Naive thymus-derived CD4-positive, alpha-beta T cell (primary cell): ENCODE measurements at regions of chr13 and their contacts with region 1.

Region 1: DNA sequence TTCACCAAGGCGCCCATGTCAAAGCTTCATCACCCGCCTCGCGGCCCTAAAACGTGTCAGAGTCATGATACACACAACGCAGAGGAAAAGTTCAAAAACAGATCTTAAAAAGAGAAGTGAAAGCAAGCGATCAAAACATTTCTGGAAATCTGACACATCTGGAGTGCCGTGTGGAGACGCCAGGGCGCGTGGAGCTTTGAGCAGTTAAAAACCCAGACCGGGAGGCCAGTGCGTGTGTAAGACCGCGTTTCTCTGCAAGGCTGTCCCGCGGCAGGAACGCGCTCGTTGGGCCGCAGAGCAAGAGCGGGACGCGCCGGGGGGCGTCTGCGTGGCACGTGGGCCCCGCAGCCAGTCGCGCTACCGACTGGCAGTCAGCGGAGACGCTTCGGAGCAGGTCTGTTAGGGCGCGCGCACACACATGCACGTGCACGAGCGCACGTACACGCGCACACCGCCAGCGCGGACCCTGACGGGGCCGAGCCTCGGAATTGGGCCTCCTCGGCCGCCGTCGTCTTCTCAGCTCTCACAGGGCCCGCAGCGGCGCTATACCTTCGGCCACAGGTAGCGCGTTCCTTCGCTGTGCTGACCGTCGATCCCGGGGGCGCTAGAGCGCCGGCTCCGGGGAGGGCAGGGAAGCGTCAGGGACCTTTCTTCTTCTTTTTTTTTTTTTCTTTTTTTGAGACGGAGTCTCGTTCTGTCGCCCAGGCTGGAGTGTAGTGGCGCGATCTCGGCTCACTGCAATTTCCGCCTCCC is 35.8 kb downstream of the RNF6 start:
- DNase-seq: peak; percentile 86 to 93 (median 92)
- ATAC-seq: peak; percentile 96
- H3K4me3 ChIP-seq: peak overlapping the region; percentile 86
- H3K4me3 Mint-ChIP-seq: peak overlapping the region; percentile 87 to 99 (median 92)
- H3K27ac ChIP-seq: peak overlapping the region; percentile 80
- H3K27ac Mint-ChIP-seq: peak overlapping the region; percentile 92 to 99 (median 95)
- H3K4me1 ChIP-seq: peaks cover 10 to 13% of the 10 kb centered on the region in 2 donors
- H3K4me1 Mint-ChIP-seq: peaks cover 0 to 36% (median 27%) of the 10 kb centered on the region in 7 donors
- H3K27me3 ChIP-seq: no peaks in the 10 kb centered on the region
- H3K27me3 Mint-ChIP-seq: no peaks in the 10 kb centered on the region

Region 2: GRCh38 chr13:24922745-24923591 is 1263.3 kb before region 1 on chr13:
- CTCF ChIA-PET with region 1: no interaction called
- POLR2A ChIA-PET with region 1: no interaction called
- intact Hi-C with region 1: loop called in 1 of 2 experiments (anchors 5 kb)
- DNase-seq: peak; percentile 79 to 93 (median 87)
- ATAC-seq: peak; percentile 100
- H3K4me3 ChIP-seq: peak overlapping the region; percentile 78
- H3K4me3 Mint-ChIP-seq: peak overlapping the region; percentile 89 to 100 (median 98)
- H3K27ac ChIP-seq: peak overlapping the region; percentile 71
- H3K27ac Mint-ChIP-seq: peak overlapping the region; percentile 73 to 95 (median 91)
- H3K4me1 ChIP-seq: no peaks in the 10 kb centered on the region
- H3K4me1 Mint-ChIP-seq: peaks cover 0 to 22% (median 14%) of the 10 kb centered on the region in 7 donors
- H3K27me3 ChIP-seq: no peaks in the 10 kb centered on the region
- H3K27me3 Mint-ChIP-seq: peaks cover 0 to 12% (median 0%) of the 10 kb centered on the region in 5 donors

Region 3: GRCh38 chr13:26168237-26168820 is 18.0 kb before region 1 on chr13:
- CTCF ChIA-PET with region 1: no interaction called
- POLR2A ChIA-PET with region 1: no interaction called
- intact Hi-C with region 1: no loop called
- DNase-seq: no peak
- ATAC-seq: no peak
- H3K4me3 ChIP-seq: no peak overlapping the region
- H3K4me3 Mint-ChIP-seq: no peak overlapping the region
- H3K27ac ChIP-seq: no peak overlapping the region
- H3K27ac Mint-ChIP-seq: no peak overlapping the region
- H3K4me1 ChIP-seq: no peaks in the 10 kb centered on the region
- H3K4me1 Mint-ChIP-seq: peaks cover 0 to 3% (median 0%) of the 10 kb centered on the region in 7 donors
- H3K27me3 ChIP-seq: no peaks in the 10 kb centered on the region
- H3K27me3 Mint-ChIP-seq: peaks cover 0 to 8% (median 0%) of the 10 kb centered on the region in 5 donors

Region 4: GRCh38 chr13:26198110-26198509 is 11.8 kb after region 1 on chr13:
- CTCF ChIA-PET with region 1: interaction called, 4 read pairs
- POLR2A ChIA-PET with region 1: interaction called, 9 read pairs
- intact Hi-C with region 1: loop called in 1 of 2 experiments (anchors 2 kb)
- DNase-seq: no peak
- ATAC-seq: no peak
- H3K4me3 ChIP-seq: no peak overlapping the region
- H3K4me3 Mint-ChIP-seq: no peak overlapping the region
- H3K27ac ChIP-seq: no peak overlapping the region
- H3K27ac Mint-ChIP-seq: no peak overlapping the region
- H3K4me1 ChIP-seq: no peaks in the 10 kb centered on the region
- H3K4me1 Mint-ChIP-seq: peaks cover 0 to 5% (median 0%) of the 10 kb centered on the region in 7 donors
- H3K27me3 ChIP-seq: no peaks in the 10 kb centered on the region
- H3K27me3 Mint-ChIP-seq: no peaks in the 10 kb centered on the region

Region 5: DNA sequence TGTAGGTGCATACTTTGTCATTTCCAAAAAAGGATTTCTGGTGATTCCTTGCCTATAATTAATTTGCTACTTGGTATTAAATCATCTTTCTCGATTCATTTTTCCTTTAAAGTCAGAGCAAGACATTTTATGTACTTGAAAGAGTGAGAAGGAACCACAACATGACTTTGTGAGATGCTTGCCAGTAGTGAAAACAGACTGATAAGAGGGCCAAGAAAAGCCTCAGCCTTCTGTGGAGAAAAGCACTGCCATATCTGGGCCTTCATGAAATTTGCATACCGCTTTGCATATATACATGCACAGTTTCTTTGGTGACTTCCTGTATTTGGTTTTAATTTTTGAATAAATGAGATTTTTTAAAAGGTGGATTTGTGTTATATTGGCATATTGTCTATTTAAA is 196.1 kb after region 1 on chr13:
- CTCF ChIA-PET with region 1: no interaction called
- POLR2A ChIA-PET with region 1: no interaction called
- intact Hi-C with region 1: loop called in 1 of 2 experiments (anchors 10 kb)
- DNase-seq: no peak
- ATAC-seq: no peak
- H3K4me3 ChIP-seq: no peak overlapping the region
- H3K4me3 Mint-ChIP-seq: no peak overlapping the region
- H3K27ac ChIP-seq: no peak overlapping the region
- H3K27ac Mint-ChIP-seq: no peak overlapping the region
- H3K4me1 ChIP-seq: peaks cover 0 to 4% of the 10 kb centered on the region in 2 donors
- H3K4me1 Mint-ChIP-seq: peaks cover 5 to 24% (median 14%) of the 10 kb centered on the region in 7 donors
- H3K27me3 ChIP-seq: no peaks in the 10 kb centered on the region
- H3K27me3 Mint-ChIP-seq: no peaks in the 10 kb centered on the region

Region 6: DNA sequence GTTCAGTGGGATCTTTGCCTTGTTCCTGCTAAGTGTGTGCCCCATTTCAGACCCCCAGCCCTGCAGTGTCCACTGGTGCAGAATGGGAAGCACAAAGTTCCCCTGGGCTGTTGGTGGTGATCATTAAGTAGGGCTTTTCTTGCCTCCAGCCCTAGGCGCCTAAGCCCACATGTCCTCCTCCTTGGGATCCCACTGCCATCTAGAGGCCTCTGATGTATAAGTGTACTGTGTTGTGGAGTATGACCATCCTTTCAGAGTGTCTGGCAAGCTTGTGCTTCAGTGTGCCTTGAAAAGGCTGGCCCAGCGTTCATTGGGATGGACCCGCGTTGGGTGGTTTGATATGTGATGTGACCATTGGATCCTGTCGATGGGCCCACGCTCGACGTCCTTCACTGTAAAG is 442.4 kb after region 1 on chr13:
- CTCF ChIA-PET with region 1: interaction called, 3 read pairs
- POLR2A ChIA-PET with region 1: no interaction called
- intact Hi-C with region 1: loop called in 1 of 2 experiments (anchors 1 kb)
- DNase-seq: no peak
- ATAC-seq: no peak
- H3K4me3 ChIP-seq: no peak overlapping the region
- H3K4me3 Mint-ChIP-seq: no peak overlapping the region
- H3K27ac ChIP-seq: no peak overlapping the region
- H3K27ac Mint-ChIP-seq: no peak overlapping the region
- H3K4me1 ChIP-seq: no peaks in the 10 kb centered on the region
- H3K4me1 Mint-ChIP-seq: no peaks in the 10 kb centered on the region
- H3K27me3 ChIP-seq: no peaks in the 10 kb centered on the region
- H3K27me3 Mint-ChIP-seq: peaks cover 0 to 13% (median 0%) of the 10 kb centered on the region in 5 donors

Region 7: GRCh38 chr13:26872525-26873385 is 686.5 kb after region 1 on chr13:
- CTCF ChIA-PET with region 1: no interaction called
- POLR2A ChIA-PET with region 1: no interaction called
- intact Hi-C with region 1: loop called in 1 of 2 experiments (anchors 10 kb)
- DNase-seq: peak in 7 of 9 donors; percentile 16 to 53 (median 28)
- ATAC-seq: no peak
- H3K4me3 ChIP-seq: no peak overlapping the region
- H3K4me3 Mint-ChIP-seq: no peak overlapping the region
- H3K27ac ChIP-seq: no peak overlapping the region
- H3K27ac Mint-ChIP-seq: no peak overlapping the region
- H3K4me1 ChIP-seq: no peaks in the 10 kb centered on the region
- H3K4me1 Mint-ChIP-seq: no peaks in the 10 kb centered on the region
- H3K27me3 ChIP-seq: peaks cover 0 to 3% of the 10 kb centered on the region in 2 donors
- H3K27me3 Mint-ChIP-seq: peaks cover 0 to 24% (median 8%) of the 10 kb centered on the region in 5 donors

Region 8: DNA sequence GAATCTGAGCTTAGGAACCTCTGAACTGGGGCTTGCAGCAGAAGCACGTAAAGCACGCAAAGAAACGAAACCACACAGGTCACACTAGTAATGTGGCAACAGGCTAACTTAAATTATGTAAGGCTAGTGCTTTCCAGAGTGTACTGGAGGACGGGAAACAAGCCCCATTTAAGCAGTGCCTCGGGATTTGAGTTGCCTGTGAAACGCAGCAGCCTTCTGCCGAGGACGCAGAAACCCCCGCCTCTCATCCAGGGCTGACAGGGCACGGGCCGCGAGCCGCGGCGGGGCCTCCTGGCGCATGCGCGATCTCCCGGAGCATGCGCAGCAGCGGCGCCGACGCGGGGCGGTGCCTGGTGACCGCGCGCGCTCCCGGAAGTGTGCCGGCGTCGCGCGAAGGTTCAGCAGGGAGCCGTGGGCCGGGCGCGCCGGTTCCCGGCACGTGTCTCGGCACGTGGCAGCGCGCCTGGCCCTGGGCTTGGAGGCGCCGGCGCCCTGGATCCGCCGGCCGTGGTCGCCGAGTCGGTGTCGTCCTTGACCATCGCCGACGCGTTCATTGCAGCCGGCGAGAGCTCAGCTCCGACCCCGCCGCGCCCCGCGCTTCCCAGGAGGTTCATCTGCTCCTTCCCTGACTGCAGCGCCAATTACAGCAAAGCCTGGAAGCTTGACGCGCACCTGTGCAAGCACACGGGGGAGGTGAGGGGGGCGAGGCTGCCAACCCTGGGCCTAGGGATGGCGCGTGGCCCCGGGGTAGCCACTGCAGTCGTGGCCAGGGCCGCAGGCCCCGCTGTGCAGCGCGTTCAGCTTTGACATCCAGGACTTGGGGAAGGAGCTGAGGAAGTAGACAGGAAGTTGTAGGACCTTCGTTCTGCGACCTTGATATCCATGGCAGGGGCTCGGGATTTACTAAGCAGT is 1238.2 kb after region 1 on chr13 and contains the start of gene GTF3A:
- CTCF ChIA-PET with region 1: no interaction called
- POLR2A ChIA-PET with region 1: no interaction called
- intact Hi-C with region 1: loop called in 1 of 2 experiments (anchors 10 kb)
- DNase-seq: peak; percentile 83 to 97 (median 93)
- ATAC-seq: peak; percentile 77
- H3K4me3 ChIP-seq: peak within 1 kb of the TSS; percentile 71
- H3K4me3 Mint-ChIP-seq: peak within 1 kb of the TSS; percentile 81 to 96 (median 92)
- H3K27ac ChIP-seq: peak within 1 kb of the TSS; percentile 86
- H3K27ac Mint-ChIP-seq: peak within 1 kb of the TSS; percentile 88 to 98 (median 95)
- H3K4me1 ChIP-seq: peaks cover 24 to 45% of the 10 kb centered on the region in 2 donors
- H3K4me1 Mint-ChIP-seq: peaks cover 27 to 47% (median 42%) of the 10 kb centered on the region in 7 donors
- H3K27me3 ChIP-seq: no peaks in the 10 kb centered on the region
- H3K27me3 Mint-ChIP-seq: no peaks in the 10 kb centered on the region
- total RNA-seq, gene GTF3A: 123 to 254 (median 206) TPM